Calu3 (cell line): ENCODE measurements at regions of chr1 and their contacts with region 1.

Region 1: GRCh38 chr1:180384606-180385005 is 117.8 kb downstream of the ACBD6 start:
- DNase-seq: no peak
- H3K4me3 Mint-ChIP-seq: no peak overlapping the region
- H3K27ac Mint-ChIP-seq: no peak overlapping the region
- H3K4me1 Mint-ChIP-seq: peaks cover 40% of the 10 kb centered on the region
- H3K27me3 Mint-ChIP-seq: no peaks in the 10 kb centered on the region
- CTCF ChIP-seq: no peak

Region 2: GRCh38 chr1:180310095-180310494 is 74.5 kb before region 1 on chr1:
- CTCF ChIA-PET with region 1: no interaction called
- intact Hi-C with region 1: loop called (anchors 2 kb)
- DNase-seq: peak; percentile 10
- H3K4me3 Mint-ChIP-seq: no peak overlapping the region
- H3K27ac Mint-ChIP-seq: no peak overlapping the region
- H3K4me1 Mint-ChIP-seq: peaks cover 23% of the 10 kb centered on the region
- H3K27me3 Mint-ChIP-seq: no peaks in the 10 kb centered on the region
- CTCF ChIP-seq: no peak

Region 3: DNA sequence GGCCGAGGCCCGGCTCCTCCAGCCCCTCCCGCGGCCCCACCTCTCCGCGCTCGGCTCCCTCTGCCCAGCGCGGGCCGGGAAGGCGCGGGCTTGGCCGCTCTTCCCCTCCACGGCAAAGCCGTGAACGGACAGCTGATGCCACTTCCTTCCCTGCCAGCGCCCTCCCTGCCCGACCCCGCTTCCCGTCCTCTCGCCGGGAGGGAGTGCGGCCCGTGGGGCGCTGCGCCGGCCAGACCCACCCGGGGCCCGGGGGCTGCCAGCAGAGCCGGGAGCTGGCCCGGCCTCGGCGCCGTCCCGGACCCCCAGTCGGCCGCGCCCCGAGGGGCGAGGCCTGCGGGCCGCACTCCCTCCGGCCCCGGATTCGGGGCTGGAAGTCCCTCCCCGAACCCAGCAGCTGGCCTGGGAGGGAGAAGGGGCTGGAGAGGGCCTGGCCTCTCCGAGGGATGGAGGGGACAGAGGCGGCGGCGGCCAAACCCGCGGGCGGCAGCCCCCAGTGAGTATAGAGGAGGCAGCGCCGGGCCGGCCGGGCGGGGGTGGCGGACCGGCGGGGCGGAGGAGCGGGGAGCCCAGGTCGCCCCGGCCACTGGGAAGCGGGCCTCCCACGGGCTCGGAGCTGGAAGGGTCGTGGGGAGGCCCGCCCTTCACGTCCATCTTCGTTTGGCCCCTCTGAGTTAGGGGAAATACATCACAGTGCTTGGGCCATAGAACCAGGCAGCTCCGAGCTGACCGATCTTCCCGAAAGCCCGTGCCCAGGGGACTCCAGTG is 528.4 kb after region 1 on chr1 and contains the start of gene KIAA1614:
- CTCF ChIA-PET with region 1: no interaction called
- intact Hi-C with region 1: no loop called
- DNase-seq: peak; percentile 13
- H3K4me3 Mint-ChIP-seq: peak within 1 kb of the TSS; percentile 66
- H3K27ac Mint-ChIP-seq: no peak within 1 kb of the TSS
- H3K4me1 Mint-ChIP-seq: peaks cover 17% of the 10 kb centered on the region
- H3K27me3 Mint-ChIP-seq: peaks cover 55% of the 10 kb centered on the region
- CTCF ChIP-seq: no peak
- total RNA-seq, gene KIAA1614: 0.19 and 0.27 TPM in 2 replicates